ENCODE measurements at regions of chr20 and their contacts with region 1.

Region 1: DNA sequence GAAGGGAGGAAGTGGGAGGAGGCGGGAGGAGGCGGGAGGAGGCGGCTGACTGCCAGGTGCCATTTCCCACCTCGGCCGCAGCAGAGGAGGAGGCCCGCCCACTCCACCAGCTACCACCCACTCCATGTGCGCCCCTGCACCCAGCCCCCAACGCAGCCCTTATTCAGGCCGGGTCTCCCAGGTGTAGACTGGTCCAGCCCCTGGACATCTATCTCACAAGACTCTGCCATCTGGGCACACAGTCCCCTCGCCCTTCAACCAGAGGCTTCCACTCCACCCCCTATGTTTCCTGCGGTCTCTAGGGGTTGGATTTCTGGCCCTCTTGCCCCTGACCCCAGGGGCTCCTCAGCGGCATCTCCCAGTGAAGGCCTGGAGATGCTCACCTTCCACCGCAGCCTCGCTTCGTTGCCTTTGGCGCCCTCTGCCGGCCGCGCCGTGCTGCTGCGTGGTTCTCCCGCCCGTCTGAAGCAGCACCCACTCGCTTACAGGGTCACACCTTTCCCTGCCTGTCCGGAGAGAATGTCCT is 32.6 kb upstream of the FAM83D start:
- DNase-seq: peak; percentile 61 to 90 (median 78)
- ATAC-seq: peak; percentile 88
- H3K4me3 ChIP-seq: peak overlapping the region; percentile 10
- H3K4me3 Mint-ChIP-seq: peak overlapping the region; percentile 5
- H3K27ac ChIP-seq: peak overlapping the region; percentile 15 to 59
- H3K27ac Mint-ChIP-seq: peak overlapping the region; percentile 77
- H3K4me1 ChIP-seq: peaks cover 24% of the 10 kb centered on the region
- H3K4me1 Mint-ChIP-seq: peaks cover 33% of the 10 kb centered on the region
- H3K27me3 ChIP-seq: no peaks in the 10 kb centered on the region
- H3K27me3 Mint-ChIP-seq: no peaks in the 10 kb centered on the region
- CTCF ChIP-seq: peak; percentile 96

Region 2: GRCh38 chr20:38663660-38664059 is 230.0 kb before region 1 on chr20:
- CTCF ChIA-PET with region 1: no interaction called
- POLR2A ChIA-PET with region 1: no interaction called
- intact Hi-C with region 1: loop called in 1 of 2 experiments (anchors 5 kb)
- DNase-seq: no peak
- ATAC-seq: no peak
- H3K4me3 ChIP-seq: no peak overlapping the region
- H3K4me3 Mint-ChIP-seq: no peak overlapping the region
- H3K27ac ChIP-seq: no peak overlapping the region
- H3K27ac Mint-ChIP-seq: no peak overlapping the region
- H3K4me1 ChIP-seq: peaks cover 3% of the 10 kb centered on the region
- H3K4me1 Mint-ChIP-seq: no peaks in the 10 kb centered on the region
- H3K27me3 ChIP-seq: peaks cover 29 to 45% of the 10 kb centered on the region in 2 experiments
- H3K27me3 Mint-ChIP-seq: peaks cover 67% of the 10 kb centered on the region
- CTCF ChIP-seq: no peak

Region 3: DNA sequence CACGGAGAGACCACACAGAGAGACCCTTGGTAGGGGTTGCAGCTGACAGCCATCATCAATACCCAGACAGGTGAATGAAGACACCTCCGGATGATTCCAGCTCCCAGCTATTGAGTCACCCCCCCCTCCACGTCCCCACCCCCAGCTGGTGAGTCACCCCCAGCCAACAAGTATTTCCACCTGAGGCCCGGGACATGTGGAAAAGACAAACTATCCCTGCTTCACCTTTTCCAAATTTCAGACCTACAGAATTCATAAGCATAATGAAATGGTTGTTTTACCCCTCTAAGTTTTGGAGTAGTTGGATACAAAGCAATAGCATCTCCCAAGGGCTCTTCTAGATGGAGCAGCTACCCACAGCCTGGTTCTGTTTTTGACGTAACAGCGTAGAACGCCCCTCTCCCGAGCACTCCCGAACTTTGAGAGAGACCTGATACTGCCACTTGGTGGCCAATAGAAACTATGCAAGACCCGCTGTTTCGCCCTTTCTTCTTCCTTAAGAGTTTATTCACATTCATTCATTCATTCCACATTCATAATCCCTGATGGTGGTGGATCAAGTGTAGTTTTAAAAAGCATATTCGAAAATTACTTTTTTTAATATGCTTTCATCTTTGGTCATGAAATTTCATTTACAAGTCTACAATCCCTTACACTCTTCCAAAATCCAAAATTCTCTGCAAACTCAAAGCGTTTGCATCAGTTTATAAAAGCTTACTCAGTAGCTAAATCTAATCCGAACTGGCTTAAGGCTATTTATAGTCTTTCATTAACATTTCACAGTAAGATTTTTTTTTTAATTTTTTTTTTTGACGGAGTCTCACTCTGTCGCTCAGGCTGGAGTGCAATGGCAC is 103.2 kb before region 1 on chr20:
- CTCF ChIA-PET with region 1: no interaction called
- POLR2A ChIA-PET with region 1: no interaction called
- intact Hi-C with region 1: loop called (anchors 1 to 5 kb)
- DNase-seq: peak in 9 of 14 experiments; percentile 17 to 79 (median 51)
- ATAC-seq: peak; percentile 96
- H3K4me3 ChIP-seq: no peak overlapping the region
- H3K4me3 Mint-ChIP-seq: no peak overlapping the region
- H3K27ac ChIP-seq: no peak overlapping the region
- H3K27ac Mint-ChIP-seq: no peak overlapping the region
- H3K4me1 ChIP-seq: peaks cover 10% of the 10 kb centered on the region
- H3K4me1 Mint-ChIP-seq: peaks cover 13% of the 10 kb centered on the region
- H3K27me3 ChIP-seq: no peaks in the 10 kb centered on the region
- H3K27me3 Mint-ChIP-seq: no peaks in the 10 kb centered on the region
- CTCF ChIP-seq: peak; percentile 85

Region 4: DNA sequence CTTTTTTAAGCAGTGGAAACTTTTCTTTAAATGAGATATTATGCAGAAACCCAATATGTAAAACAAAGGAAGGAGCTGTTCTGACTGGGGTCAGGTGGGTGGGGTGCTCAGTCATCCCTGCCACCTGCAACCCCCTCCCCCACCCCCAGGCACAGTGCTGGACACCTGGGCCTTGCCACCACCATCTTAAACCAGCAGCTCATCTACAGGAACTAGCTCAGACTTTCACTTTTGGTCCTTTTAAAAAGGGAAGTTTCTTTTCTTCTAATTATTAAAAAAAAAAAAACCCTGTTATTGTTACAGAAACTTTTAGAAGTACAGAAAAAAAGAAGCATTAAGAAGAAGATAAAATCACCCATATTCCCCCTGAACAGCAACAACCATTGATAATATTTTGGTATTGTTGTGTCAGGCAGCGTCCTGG is 51.1 kb before region 1 on chr20:
- CTCF ChIA-PET with region 1: interaction called, 4 read pairs
- POLR2A ChIA-PET with region 1: interaction called, 3 read pairs
- intact Hi-C with region 1: loop called in 1 of 2 experiments (anchors 5 kb)
- DNase-seq: peak in 9 of 14 experiments; percentile 27 to 78 (median 46)
- ATAC-seq: peak; percentile 23
- H3K4me3 ChIP-seq: peak overlapping the region; percentile 25
- H3K4me3 Mint-ChIP-seq: peak overlapping the region; percentile 78
- H3K27ac ChIP-seq: peak overlapping the region; percentile 63 to 94
- H3K27ac Mint-ChIP-seq: peak overlapping the region; percentile 97
- H3K4me1 ChIP-seq: peaks cover 63% of the 10 kb centered on the region
- H3K4me1 Mint-ChIP-seq: peaks cover 91% of the 10 kb centered on the region
- H3K27me3 ChIP-seq: no peaks in the 10 kb centered on the region
- H3K27me3 Mint-ChIP-seq: no peaks in the 10 kb centered on the region
- CTCF ChIP-seq: no peak

Region 5: DNA sequence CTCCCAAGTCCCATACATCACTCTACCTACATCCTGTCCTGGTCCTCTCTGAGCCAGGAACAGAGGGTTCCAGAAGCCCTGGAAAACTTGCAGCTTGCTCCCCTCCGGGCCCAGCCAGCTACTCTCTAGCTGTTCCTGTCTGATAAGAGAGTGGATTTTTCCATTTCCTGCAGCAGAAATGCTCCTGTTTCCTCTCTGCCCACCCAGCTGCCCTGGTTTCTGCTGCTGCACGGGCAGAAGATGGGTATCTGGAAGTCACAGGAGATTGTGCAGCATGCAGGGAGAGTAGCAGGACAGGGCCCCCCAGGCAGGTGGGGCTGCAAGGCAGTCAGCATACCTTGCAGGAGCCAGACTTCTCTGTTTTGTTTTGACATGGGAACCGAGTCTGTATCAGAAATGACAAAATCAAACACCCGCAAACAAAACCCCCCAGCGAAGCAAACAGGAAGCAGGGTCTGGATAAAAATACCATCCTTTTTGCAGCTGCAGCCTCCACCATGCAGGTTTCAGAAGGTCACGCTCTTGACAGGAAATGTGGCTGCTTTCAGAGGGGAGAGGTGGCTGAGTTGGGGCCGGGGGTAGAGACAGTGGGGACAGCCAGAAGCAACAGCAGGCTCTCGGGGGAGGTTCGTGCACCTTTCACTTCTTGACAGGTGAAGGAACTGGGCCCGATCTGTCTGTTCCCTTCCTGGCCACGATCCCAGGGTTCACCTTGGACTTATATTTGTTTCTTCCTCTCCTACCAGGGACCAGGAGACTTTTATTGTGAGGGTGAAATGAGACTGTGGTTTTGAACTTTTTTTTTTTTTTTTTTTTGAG is 18.2 kb before region 1 on chr20:
- CTCF ChIA-PET with region 1: interaction called, 9 read pairs
- POLR2A ChIA-PET with region 1: interaction called, 24 read pairs
- intact Hi-C with region 1: loop called in 1 of 2 experiments (anchors 1 kb)
- DNase-seq: peak; percentile 45 to 89 (median 62)
- ATAC-seq: peak; percentile 51
- H3K4me3 ChIP-seq: peak overlapping the region; percentile 40
- H3K4me3 Mint-ChIP-seq: peak overlapping the region; percentile 84
- H3K27ac ChIP-seq: peak overlapping the region; percentile 76 to 89
- H3K27ac Mint-ChIP-seq: peak overlapping the region; percentile 89
- H3K4me1 ChIP-seq: peaks cover 70% of the 10 kb centered on the region
- H3K4me1 Mint-ChIP-seq: peaks cover 98% of the 10 kb centered on the region
- H3K27me3 ChIP-seq: no peaks in the 10 kb centered on the region
- H3K27me3 Mint-ChIP-seq: no peaks in the 10 kb centered on the region
- CTCF ChIP-seq: no peak

Measured in CD4-positive, alpha-beta T cell (primary cell).